HEK293T (cell line): ENCODE measurements at regions of chr11 and their contacts with region 1.

Region 1: DNA sequence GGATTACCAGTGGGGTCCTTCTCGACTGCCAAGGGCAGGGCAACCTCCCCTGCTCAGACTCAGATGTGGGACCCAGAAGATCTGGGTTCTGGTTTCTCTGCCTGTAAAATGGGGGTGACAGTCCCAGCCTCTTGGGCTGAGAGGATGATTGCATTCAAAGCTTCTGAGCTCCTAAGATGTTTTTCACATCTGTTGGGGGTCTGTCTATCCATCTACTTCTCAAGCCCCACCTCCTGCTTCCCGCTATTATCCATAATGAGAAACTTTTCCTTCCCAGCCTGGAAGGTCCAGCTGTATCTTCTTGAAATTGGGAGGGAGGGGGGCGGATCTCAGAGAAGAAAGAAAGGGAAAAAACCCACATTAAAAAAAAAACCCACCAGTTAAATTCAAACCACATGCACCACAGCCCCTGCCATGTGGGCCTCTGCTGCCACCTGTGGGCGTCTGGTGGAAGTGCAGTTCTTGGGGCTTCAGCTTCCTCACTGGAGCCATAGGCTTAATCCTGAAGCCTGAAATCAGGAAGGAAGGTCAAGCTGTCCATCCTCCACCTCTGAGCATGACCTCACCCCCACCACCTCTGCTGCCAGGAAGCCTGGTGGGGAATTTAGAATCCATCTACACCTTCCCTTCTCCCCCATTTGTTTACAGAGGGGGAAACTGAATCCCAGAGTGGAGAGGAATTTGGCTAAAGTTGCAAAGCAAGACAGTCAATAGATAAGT is 27.3 kb downstream of the ARHGEF17 start:
- DNase-seq: peak; percentile 87

Region 2: DNA sequence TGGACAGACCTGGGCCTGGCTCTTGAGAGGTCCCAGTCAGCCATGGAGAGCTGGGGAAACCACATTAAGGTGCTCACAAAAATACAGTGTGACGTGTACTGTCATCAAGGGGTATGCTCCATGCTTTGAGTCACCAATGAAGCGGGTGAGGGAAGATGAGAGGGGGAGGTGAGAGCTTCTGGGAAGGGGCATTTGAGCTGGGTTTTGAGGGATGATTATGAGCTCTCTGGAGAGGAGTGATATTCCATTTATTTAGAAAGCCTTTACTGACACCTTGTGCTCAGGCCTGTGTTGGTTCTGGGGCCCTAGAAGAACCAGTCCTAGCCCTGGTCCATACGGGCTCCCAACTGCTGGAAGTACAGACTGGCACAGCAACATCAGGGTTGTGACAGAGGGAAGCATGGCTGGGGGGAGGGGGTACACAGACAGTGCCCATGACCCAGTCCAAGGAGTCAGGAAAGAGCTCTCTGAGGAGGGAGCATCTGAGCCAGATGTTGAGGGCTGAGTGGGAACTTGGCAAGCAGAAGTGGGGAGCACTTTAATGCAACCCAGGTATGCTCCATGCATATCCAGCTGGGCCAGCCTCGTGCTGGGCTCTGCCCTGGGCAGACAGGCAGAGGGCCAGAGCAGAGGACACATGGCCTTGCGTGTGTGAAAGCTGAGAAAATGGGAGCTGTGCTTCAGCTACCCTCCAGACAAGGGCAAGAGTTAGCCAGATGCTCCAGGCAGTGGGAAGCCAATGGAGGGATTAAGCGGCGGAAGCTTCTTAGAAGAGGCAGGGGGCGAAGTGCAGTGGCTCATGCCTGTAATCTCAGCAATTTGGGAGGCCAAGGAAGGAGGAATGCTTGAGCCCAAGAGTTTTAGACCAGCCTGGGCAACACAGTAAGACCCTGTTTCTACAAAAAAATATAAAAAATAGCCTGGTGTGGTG is 37.4 kb before region 1 on chr11:
- CTCF ChIA-PET with region 1: interaction called, 10 read pairs
- POLR2A ChIA-PET with region 1: interaction called, 3 read pairs
- DNase-seq: no peak

Region 3: DNA sequence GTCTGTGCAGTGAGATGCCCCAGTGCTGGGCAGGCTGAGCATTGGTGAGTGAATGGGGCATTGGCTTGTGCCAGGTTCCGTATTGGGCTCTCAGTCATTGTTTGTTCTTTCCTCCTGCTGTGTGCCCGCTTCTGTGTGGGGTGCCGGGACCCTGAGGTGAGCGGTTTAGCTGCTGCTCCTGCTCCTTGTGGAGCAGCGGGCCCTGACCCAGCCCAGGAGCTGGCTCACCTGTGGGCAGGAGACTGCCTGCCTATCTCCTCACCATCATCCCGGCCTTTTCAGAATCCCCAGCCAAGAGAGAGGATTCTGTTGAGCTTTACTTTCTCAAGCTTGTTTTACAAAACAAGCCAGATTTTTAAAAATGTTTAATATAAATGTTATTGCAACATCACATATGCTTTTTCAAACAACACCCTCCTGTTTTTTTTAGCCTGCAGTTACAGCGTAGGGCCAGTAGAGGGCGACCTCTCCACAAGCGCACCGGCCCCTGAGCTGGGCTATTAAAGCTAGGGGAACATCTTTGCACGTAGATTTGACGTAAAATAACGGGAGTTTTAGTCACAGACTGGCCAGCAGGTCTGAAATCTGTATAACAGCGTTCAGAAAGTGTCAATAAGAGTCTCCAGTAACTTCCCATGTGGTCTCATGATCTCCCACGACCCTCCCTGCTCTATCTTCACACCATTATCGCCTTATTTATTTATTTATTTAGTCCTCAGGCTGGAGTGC is 15.7 kb after region 1 on chr11:
- CTCF ChIA-PET with region 1: interaction called, 16 read pairs
- POLR2A ChIA-PET with region 1: no interaction called
- DNase-seq: peak; percentile 78